ENCODE measurements at regions of chr6 and their contacts with region 1.

Region 1: DNA sequence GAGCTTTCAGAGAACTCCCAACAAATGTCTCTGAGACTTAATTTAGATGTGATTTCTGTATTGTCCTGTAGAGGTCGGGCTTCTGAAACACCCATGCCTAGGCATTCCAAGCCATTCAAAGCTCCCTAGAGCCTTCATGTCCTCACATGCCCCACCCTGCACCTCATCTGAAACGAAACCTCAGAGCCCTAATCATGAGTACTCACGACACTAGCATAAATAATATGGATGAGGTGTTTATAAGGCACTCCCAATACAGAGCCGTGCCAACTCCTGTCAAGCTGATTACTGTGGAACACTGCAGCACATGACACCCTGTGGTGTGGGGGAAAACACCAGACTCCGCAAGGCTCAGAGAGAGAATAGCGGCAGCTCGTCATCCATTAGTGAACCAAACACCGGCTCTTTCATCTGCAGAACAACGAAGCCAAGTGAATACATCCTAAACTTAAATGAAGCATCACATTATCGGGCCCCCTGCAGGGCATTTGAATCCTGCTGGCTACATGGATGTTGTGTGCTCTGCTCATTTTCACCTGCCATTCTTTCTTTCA is 83.8 kb downstream of the FNDC1 start:
- DNase-seq: peak; percentile 63
- CTCF ChIP-seq: peak; percentile 34

Region 2: DNA sequence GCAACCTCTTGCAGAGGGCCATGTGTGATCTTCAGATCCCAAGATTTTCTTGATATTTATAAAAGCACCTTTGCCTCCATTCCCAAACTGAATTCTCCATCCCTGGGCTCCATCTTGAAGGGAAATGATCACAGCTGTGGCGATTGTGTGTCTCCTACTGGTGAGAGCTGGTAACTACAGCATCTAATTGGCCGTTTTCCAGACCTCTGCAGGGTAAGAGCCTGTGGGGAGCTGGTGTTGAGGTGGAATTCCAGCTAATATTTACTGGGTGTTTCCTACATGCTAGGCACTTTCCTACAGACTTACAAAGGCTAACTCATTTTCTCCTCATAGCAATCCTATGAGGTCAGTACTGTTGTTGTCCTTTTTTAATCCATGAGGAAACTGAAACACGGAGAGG is 143.0 kb before region 1 on chr6:
- CTCF ChIA-PET with region 1: no interaction called
- POLR2A ChIA-PET with region 1: no interaction called
- DNase-seq: no peak
- CTCF ChIP-seq: peak; percentile 59

Region 3: DNA sequence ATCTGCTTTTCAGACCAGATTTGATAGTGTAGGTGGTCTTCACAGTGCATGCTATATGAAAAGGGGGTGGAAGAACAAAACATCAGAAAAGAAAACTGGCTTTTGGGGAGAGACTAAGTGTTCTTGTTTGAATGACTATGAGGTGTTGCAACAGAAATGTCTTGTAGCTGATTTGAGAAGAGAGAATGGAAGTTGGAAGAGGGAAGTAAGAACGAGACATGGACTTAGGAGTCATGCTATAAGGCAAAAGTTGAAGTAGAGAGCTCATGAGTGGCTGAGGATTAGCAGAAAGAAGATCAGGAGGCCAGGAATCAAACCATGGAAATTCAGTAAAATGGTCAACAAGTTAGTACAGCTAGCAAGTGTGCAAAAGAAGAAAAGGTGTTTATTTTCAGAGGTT is 51.7 kb before region 1 on chr6:
- CTCF ChIA-PET with region 1: interaction called, 12 read pairs
- POLR2A ChIA-PET with region 1: no interaction called
- DNase-seq: no peak
- CTCF ChIP-seq: no peak

Region 4: GRCh38 chr6:159217595-159218275 is 35.3 kb before region 1 on chr6:
- CTCF ChIA-PET with region 1: interaction called, 10 read pairs
- POLR2A ChIA-PET with region 1: no interaction called
- DNase-seq: peak; percentile 67
- CTCF ChIP-seq: peak; percentile 54

Region 5: DNA sequence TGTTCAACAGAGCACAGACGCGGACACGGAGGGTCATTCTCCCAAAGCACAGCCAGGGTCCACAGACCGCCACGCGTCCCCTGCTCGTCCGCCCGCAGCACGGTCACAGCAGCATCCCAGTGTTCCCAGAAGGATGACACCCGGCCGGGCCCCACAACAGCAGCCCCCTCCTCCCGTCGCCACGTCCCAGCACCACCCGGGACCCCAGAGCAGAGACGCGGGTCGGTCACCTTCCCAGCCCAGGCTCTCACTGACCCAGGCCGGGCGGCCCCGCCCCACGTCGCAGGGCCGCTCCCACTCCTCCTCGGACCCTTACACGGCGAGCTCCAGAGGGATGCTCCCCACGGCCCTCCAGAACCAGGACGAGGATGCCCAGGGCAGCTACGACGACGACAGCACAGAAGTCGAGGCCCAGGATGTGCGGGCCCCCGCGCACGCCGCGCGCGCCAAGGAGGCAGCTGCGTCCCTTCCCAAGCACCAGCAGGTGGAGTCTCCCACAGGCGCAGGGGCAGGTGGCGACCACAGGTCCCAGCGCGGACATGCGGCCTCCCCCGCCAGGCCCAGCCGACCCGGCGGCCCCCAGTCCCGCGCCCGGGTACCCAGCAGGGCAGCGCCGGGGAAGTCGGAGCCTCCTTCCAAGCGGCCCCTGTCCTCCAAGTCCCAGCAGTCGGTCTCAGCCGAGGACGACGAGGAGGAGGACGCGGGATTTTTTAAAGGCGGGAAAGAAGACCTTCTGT is 19.5 kb before region 1 on chr6:
- CTCF ChIA-PET with region 1: interaction called, 31 read pairs
- POLR2A ChIA-PET with region 1: no interaction called
- DNase-seq: no peak
- CTCF ChIP-seq: no peak

Region 6: GRCh38 chr6:159238920-159239558 is 14.0 kb before region 1 on chr6:
- CTCF ChIA-PET with region 1: interaction called, 31 read pairs
- POLR2A ChIA-PET with region 1: no interaction called
- DNase-seq: no peak
- CTCF ChIP-seq: no peak

Region 7: GRCh38 chr6:159279790-159280277 is 26.8 kb after region 1 on chr6:
- CTCF ChIA-PET with region 1: interaction called, 13 read pairs
- POLR2A ChIA-PET with region 1: no interaction called
- DNase-seq: no peak
- CTCF ChIP-seq: no peak

Region 8: GRCh38 chr6:159608961-159609651 is 356.1 kb after region 1 on chr6:
- CTCF ChIA-PET with region 1: interaction called, 18 read pairs
- POLR2A ChIA-PET with region 1: no interaction called
- DNase-seq: peak; percentile 57
- CTCF ChIP-seq: peak; percentile 66

Measured in GM10248 (cell line).